ENCODE measurements at regions of chr12 and their contacts with region 1.

Region 1: GRCh38 chr12:123972457-123973401 is at the starts of genes CCDC92 and ZNF664:
- DNase-seq: peak; percentile 89
- H3K4me3 ChIP-seq: peak within 1 kb of the TSS; percentile 75 to 85 (median 75)
- H3K27ac ChIP-seq: peak within 1 kb of the TSS; percentile 32
- H3K4me1 ChIP-seq: peaks cover 4% of the 10 kb centered on the region
- H3K27me3 ChIP-seq: no peaks in the 10 kb centered on the region
- CTCF ChIP-seq: peak in 1 of 2 donors; percentile 7
- POLR2A ChIP-seq: peak; percentile 62
- total RNA-seq, gene CCDC92: 35.1 and 41.6 TPM in 2 replicates
- total RNA-seq, gene ZNF664: 63.3 and 71.3 TPM in 2 replicates

Region 2: GRCh38 chr12:123633379-123634141 is 339.2 kb before region 1 on chr12 and contains the starts of genes EIF2B1 and GTF2H3:
- CTCF ChIA-PET with region 1: no interaction called
- POLR2A ChIA-PET with region 1: no interaction called
- dilution Hi-C with region 1: no loop called
- intact Hi-C with region 1: loop called (anchors 5 kb)
- DNase-seq: peak; percentile 96
- H3K4me3 ChIP-seq: peak within 1 kb of the TSS; percentile 92 to 97 (median 96)
- H3K27ac ChIP-seq: peak within 1 kb of the TSS; percentile 74
- H3K4me1 ChIP-seq: peaks cover 11% of the 10 kb centered on the region
- H3K27me3 ChIP-seq: no peaks in the 10 kb centered on the region
- CTCF ChIP-seq: no peak
- POLR2A ChIP-seq: peak; percentile 98
- total RNA-seq, gene EIF2B1: 61.8 and 65.7 TPM in 2 replicates
- total RNA-seq, gene GTF2H3: 28.7 and 31.3 TPM in 2 replicates

Region 3: GRCh38 chr12:123952037-123952436 is 20.7 kb before region 1 on chr12:
- CTCF ChIA-PET with region 1: no interaction called
- POLR2A ChIA-PET with region 1: no interaction called
- dilution Hi-C with region 1: no loop called
- intact Hi-C with region 1: loop called (anchors 1 kb)
- DNase-seq: peak; percentile 43
- H3K4me3 ChIP-seq: peak overlapping the region in 1 of 3 experiments; percentile 1
- H3K27ac ChIP-seq: peak overlapping the region; percentile 9
- H3K4me1 ChIP-seq: peaks cover 18% of the 10 kb centered on the region
- H3K27me3 ChIP-seq: no peaks in the 10 kb centered on the region
- CTCF ChIP-seq: no peak
- POLR2A ChIP-seq: no peak

Region 4: GRCh38 chr12:124240493-124240892 is 267.8 kb after region 1 on chr12:
- CTCF ChIA-PET with region 1: no interaction called
- POLR2A ChIA-PET with region 1: interaction called, 15 read pairs
- dilution Hi-C with region 1: no loop called
- intact Hi-C with region 1: no loop called
- DNase-seq: peak; percentile 9
- H3K4me3 ChIP-seq: no peak overlapping the region
- H3K27ac ChIP-seq: no peak overlapping the region
- H3K4me1 ChIP-seq: peaks cover 20% of the 10 kb centered on the region
- H3K27me3 ChIP-seq: no peaks in the 10 kb centered on the region
- CTCF ChIP-seq: no peak
- POLR2A ChIP-seq: no peak